Activated CD4-positive, alpha-beta memory T cell treated with anti-CD3 and anti-CD28 coated beads for 36 hours (primary cell): ENCODE measurements at regions of chr2 and their contacts with region 1.

Region 1: DNA sequence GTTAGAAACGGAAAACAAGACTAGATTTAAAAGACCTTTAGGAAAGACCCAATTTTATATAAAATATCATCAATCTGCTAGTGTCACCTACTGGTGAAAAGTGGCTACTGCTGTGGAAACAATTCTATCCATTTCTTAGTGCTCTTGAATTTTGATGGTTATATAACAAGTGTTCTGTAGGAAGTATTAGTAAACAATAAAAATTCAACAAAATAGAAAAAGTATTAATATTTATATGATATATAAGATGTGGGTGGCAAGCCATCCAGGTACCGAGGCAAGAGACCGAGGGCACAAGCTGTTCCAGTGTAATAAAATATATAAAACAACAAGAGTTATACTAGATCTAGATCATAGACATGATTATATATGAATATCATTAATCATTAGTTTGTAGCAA is 6.2 kb upstream of the TMEM87B start:
- DNase-seq: no peak
- H3K4me3 Mint-ChIP-seq: no peak overlapping the region
- H3K27ac Mint-ChIP-seq: no peak overlapping the region
- H3K4me1 Mint-ChIP-seq: peaks cover 10% of the 10 kb centered on the region
- H3K27me3 Mint-ChIP-seq: peaks cover 4% of the 10 kb centered on the region

Region 2: DNA sequence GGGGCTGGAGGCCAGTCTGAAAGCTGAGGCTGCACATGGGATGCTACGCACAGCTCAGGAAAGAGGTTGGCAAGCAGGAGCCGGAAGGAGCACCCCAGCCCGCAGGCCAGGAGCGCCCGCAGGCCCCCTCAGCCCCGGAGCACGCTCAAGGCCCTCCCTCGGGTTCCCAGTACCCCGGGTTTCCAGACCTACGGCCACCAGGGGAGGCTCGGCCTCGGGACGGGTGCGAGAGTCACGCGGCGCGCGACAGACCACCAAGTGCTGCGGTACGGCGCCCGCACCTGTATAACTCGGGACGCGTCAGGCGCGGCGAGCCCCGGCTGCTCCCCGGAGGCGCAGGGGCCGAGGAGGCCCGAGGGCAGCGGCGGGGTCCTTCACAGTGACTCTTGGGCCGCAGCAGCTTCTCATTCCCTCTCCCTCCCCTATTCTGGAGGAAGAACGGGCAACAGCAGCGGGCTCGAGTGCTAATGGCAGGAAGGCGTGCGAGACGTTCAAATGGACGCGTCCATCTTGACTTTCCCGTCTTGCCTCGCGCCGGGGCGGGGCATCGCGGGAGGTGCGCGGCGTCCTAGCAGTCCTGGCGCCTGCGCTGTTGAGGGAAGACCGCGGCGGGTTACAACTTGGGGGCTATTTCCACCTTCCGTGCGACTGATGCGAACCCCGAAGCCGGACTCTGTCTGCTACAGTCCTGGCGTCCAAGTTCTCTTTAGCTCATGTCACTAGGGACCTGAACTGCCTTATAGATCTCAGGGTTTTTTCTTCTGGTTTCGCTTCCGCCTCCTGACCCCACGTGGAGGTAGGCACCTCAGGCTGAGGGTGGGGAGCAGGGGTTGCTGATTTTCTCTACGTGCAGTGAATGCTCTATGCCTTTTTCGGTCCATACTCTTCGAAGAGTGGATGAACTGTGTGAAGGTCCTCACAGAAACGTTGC is 165.0 kb before region 1 on chr2 and contains the start of gene ANAPC1:
- CTCF ChIA-PET with region 1: interaction called, 64 read pairs
- POLR2A ChIA-PET with region 1: no interaction called
- intact Hi-C with region 1: loop called (anchors 1 kb)
- DNase-seq: peak; percentile 90
- H3K4me3 Mint-ChIP-seq: peak within 1 kb of the TSS; percentile 97
- H3K27ac Mint-ChIP-seq: peak within 1 kb of the TSS; percentile 94
- H3K4me1 Mint-ChIP-seq: peaks cover 15% of the 10 kb centered on the region
- H3K27me3 Mint-ChIP-seq: no peaks in the 10 kb centered on the region
- total RNA-seq, gene ANAPC1: 88.8 to 90.2 TPM

Region 3: DNA sequence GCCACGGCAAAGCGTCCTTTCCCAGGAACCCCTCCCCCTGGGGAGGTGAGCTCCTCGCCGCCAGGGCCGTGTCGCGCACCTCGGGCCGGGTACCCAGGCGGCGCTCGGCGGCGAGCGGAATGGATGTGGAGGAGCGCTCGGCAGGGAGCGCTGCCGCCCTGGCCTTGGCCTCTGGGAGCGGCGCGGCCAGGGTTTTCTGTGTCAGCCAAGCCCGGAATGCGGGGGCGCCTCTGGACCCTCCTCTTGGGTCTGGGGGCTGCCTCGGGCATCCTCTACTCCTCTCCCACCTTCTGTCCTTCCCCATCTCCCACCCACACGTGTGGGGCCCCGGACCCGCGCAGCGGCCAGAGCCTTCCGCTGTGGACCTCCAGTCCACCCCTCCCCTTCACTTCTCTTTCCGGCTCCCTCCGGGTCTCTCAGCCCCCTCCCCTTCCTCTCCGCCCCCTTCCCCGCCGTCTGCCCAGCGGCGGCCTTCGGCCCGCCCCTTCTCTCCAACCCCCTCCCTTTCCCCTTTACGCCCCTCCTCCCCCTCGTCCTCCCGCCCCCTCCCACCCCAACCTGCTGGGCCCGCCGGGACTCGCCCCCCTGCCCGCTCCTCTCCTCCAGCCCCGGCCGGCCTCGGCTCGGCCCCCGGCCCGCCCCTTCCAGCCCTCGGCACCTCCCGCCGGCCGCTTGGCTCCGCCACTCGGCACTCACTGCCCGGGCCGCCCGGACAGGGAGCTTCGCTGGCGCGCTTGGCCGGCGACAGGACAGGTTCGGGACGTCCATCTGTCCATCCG is 150.8 kb before region 1 on chr2 and contains the start of gene MERTK:
- CTCF ChIA-PET with region 1: interaction called, 14 read pairs
- POLR2A ChIA-PET with region 1: no interaction called
- intact Hi-C with region 1: no loop called
- DNase-seq: peak; percentile 77
- H3K4me3 Mint-ChIP-seq: peak within 1 kb of the TSS; percentile 73
- H3K27ac Mint-ChIP-seq: no peak within 1 kb of the TSS
- H3K4me1 Mint-ChIP-seq: peaks cover 6% of the 10 kb centered on the region
- H3K27me3 Mint-ChIP-seq: peaks cover 23% of the 10 kb centered on the region
- total RNA-seq, gene MERTK: 1.0 to 1.2 TPM

Region 4: DNA sequence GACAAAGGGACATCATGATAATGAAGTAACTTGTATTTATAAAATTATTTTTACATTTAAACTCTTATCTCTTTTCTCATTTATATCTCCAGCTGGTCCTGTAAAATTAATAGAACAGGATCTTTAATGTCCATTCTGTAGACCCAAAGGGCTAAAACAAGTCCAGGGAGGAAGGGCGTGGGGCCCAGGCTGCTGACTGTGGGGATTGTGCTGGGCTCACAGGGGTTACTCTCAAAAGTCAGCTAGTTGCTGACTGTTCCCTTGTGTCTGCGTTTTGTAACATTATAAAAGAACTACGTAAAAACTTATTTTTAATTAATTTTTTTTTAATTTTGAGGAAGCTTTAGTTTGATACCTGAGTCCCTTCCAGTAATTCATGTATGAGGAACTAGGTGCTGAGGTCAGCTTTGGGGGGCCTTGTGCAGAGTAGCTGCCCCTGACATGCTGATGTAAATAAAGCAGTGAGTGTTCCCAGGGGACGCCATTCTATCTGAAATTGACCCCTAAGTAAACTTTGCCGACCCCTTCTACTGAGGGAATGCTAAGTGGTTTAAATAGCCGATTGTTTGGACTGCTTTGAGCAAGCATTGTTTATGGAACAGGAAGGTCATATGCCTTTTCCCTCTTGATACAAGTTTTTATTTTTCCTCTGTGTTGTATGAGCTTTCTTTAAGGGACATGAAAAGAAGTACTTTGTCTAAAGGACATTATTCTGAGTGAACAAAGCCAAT is 94.1 kb before region 1 on chr2:
- CTCF ChIA-PET with region 1: no interaction called
- POLR2A ChIA-PET with region 1: no interaction called
- intact Hi-C with region 1: loop called (anchors 1 kb)
- DNase-seq: no peak
- H3K4me3 Mint-ChIP-seq: no peak overlapping the region
- H3K27ac Mint-ChIP-seq: no peak overlapping the region
- H3K4me1 Mint-ChIP-seq: peaks cover 19% of the 10 kb centered on the region
- H3K27me3 Mint-ChIP-seq: peaks cover 19% of the 10 kb centered on the region

Region 5: GRCh38 chr2:112433932-112434730 is 385.2 kb after region 1 on chr2:
- CTCF ChIA-PET with region 1: no interaction called
- POLR2A ChIA-PET with region 1: no interaction called
- intact Hi-C with region 1: loop called (anchors 5 kb)
- DNase-seq: no peak
- H3K4me3 Mint-ChIP-seq: no peak overlapping the region
- H3K27ac Mint-ChIP-seq: no peak overlapping the region
- H3K4me1 Mint-ChIP-seq: peaks cover 14% of the 10 kb centered on the region
- H3K27me3 Mint-ChIP-seq: peaks cover 9% of the 10 kb centered on the region